Heart right ventricle (tissue), 16 donors: ENCODE measurements at regions of chr18 and their contacts with region 1.

Region 1: GRCh38 chr18:3261371-3262246 is at the start of gene MYL12B:
- DNase-seq: peak; percentile 82 to 85
- ATAC-seq: peak; percentile 67 to 93 (median 82)
- H3K4me3 ChIP-seq: peak within 1 kb of the TSS; percentile 73 to 96 (median 87)
- H3K27ac ChIP-seq: peak within 1 kb of the TSS; percentile 96 to 100 (median 98)
- H3K4me1 ChIP-seq: peaks cover 4 to 80% (median 57%) of the 10 kb centered on the region in 9 donors
- H3K27me3 ChIP-seq: no peaks in the 10 kb centered on the region
- CTCF ChIP-seq: peak in 3 of 9 donors; percentile 8 to 24 (median 24)
- total RNA-seq, gene MYL12B: 153 to 241 (median 190) TPM

Region 2: GRCh38 chr18:3604498-3605408 is 343.1 kb after region 1 on chr18:
- intact Hi-C with region 1: loop called in 1 of 10 experiments (anchors 5 kb)
- DNase-seq: no peak
- ATAC-seq: peak; percentile 6 to 66 (median 52)
- H3K4me3 ChIP-seq: peak overlapping the region in 9 of 10 donors; percentile 0 to 58 (median 48)
- H3K27ac ChIP-seq: peak overlapping the region; percentile 71 to 92 (median 88)
- H3K4me1 ChIP-seq: peaks cover 15 to 52% (median 29%) of the 10 kb centered on the region in 9 donors
- H3K27me3 ChIP-seq: no peaks in the 10 kb centered on the region
- CTCF ChIP-seq: no peak